GM10248 (cell line): ENCODE measurements at regions of chr6 and their contacts with region 1.

Region 1: DNA sequence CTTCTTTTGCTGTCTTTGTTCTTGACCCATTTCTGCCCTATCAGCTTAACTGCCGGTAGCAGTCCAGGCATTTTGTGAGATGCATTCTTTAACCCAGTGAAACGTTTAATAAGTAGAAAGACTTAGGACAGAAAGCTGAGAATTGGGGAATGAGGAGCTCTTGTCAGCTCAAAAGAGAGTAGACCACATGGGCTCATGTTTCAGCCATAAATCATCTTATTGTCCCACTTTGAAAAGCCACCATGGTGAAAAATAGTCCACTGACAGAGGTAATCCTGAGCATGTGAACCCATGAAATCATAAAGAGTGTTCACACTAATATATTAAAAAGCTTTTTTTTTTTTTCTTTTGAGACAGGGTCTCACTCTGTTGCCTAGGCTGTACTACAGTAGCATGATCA is 16.3 kb downstream of the ORC3 start:
- DNase-seq: no peak
- CTCF ChIP-seq: no peak

Region 2: GRCh38 chr6:87617405-87617804 is 11.2 kb after region 1 on chr6:
- CTCF ChIA-PET with region 1: interaction called, 11 read pairs
- POLR2A ChIA-PET with region 1: no interaction called
- DNase-seq: no peak
- CTCF ChIP-seq: no peak